Psoas muscle (tissue), 8 donors: ENCODE measurements at regions of chr2 and their contacts with region 1.

Region 1: DNA sequence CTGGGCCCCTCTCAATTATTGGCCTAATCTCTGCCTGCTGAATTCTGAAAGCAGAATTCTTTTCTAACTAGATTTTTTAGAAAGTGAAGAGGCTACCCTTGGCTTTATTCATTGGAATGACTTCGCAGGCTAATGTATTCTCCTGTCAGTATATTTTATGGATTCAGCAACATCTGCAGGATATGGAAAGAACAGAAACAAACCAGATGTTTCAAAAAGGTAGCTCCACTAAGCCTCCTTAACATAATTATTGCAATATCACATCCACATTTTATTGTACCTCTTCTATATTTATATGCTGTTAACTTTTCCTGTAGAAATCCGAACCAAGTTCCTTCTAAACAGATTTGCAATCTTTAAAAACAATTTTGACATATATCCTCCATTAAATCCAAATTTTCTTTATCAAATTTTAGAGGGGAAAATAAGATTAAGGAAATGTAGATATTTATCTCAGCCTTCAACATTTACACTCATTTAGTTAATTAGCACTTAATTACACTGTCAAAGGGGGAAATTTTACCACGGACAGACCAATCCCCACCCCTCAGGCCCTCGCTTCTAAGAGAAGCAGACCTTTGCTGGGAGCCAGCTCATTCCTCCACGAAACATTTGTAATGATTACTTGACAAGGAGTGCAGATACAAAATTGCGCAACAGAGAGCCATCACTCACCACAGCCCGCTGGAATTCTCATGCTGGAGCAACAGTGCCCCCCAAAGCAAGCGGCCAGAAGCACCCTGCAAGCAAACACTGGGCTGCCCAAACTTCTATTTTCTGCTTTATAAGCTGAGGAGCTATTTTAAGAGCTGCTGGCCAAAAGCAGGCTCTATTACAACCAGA is 253.4 kb downstream of the ETAA1 start:
- DNase-seq: peak; percentile 81 to 89
- ATAC-seq: peak; percentile 82 to 92 (median 88)
- H3K4me3 ChIP-seq: no peak overlapping the region
- H3K27ac ChIP-seq: peak overlapping the region; percentile 80
- H3K4me1 ChIP-seq: peaks cover 26% of the 10 kb centered on the region
- H3K27me3 ChIP-seq: no peaks in the 10 kb centered on the region
- CTCF ChIP-seq: peak; percentile 68

Region 2: GRCh38 chr2:66574701-66575624 is 1075.5 kb before region 1 on chr2:
- intact Hi-C with region 1: loop called in 1 of 2 experiments (anchors 10 kb)
- DNase-seq: peak; percentile 56 to 65
- ATAC-seq: peak; percentile 55 to 73 (median 64)
- H3K4me3 ChIP-seq: peak overlapping the region; percentile 66
- H3K27ac ChIP-seq: no peak overlapping the region
- H3K4me1 ChIP-seq: peaks cover 15% of the 10 kb centered on the region
- H3K27me3 ChIP-seq: peaks cover 0 to 61% (median 28%) of the 10 kb centered on the region in 3 donors
- CTCF ChIP-seq: peak; percentile 31

Region 3: GRCh38 chr2:67108231-67108630 is 542.3 kb before region 1 on chr2:
- intact Hi-C with region 1: no loop called
- DNase-seq: no peak
- ATAC-seq: no peak
- H3K4me3 ChIP-seq: no peak overlapping the region
- H3K27ac ChIP-seq: no peak overlapping the region
- H3K4me1 ChIP-seq: no peaks in the 10 kb centered on the region
- H3K27me3 ChIP-seq: no peaks in the 10 kb centered on the region
- CTCF ChIP-seq: no peak

Region 4: GRCh38 chr2:67397143-67397986 is 253.1 kb before region 1 on chr2 and contains the start of gene ETAA1:
- intact Hi-C with region 1: loop called in 1 of 2 experiments (anchors 10 kb)
- DNase-seq: peak; percentile 94 to 96
- ATAC-seq: peak; percentile 100
- H3K4me3 ChIP-seq: peak within 1 kb of the TSS; percentile 97
- H3K27ac ChIP-seq: peak within 1 kb of the TSS; percentile 91
- H3K4me1 ChIP-seq: peaks cover 4% of the 10 kb centered on the region
- H3K27me3 ChIP-seq: no peaks in the 10 kb centered on the region
- CTCF ChIP-seq: no peak
- total RNA-seq, gene ETAA1: 2.7 to 3.6 (median 2.9) TPM

Region 5: GRCh38 chr2:67463810-67464209 is 186.7 kb before region 1 on chr2:
- intact Hi-C with region 1: loop called in 1 of 2 experiments (anchors 5 kb)
- DNase-seq: no peak
- ATAC-seq: peak; percentile 91 to 99 (median 95)
- H3K4me3 ChIP-seq: no peak overlapping the region
- H3K27ac ChIP-seq: peak overlapping the region; percentile 24
- H3K4me1 ChIP-seq: no peaks in the 10 kb centered on the region
- H3K27me3 ChIP-seq: no peaks in the 10 kb centered on the region
- CTCF ChIP-seq: no peak

Region 6: GRCh38 chr2:67600946-67601345 is 49.6 kb before region 1 on chr2:
- intact Hi-C with region 1: no loop called
- DNase-seq: no peak
- ATAC-seq: no peak
- H3K4me3 ChIP-seq: no peak overlapping the region
- H3K27ac ChIP-seq: no peak overlapping the region
- H3K4me1 ChIP-seq: no peaks in the 10 kb centered on the region
- H3K27me3 ChIP-seq: no peaks in the 10 kb centered on the region
- CTCF ChIP-seq: no peak

Region 7: DNA sequence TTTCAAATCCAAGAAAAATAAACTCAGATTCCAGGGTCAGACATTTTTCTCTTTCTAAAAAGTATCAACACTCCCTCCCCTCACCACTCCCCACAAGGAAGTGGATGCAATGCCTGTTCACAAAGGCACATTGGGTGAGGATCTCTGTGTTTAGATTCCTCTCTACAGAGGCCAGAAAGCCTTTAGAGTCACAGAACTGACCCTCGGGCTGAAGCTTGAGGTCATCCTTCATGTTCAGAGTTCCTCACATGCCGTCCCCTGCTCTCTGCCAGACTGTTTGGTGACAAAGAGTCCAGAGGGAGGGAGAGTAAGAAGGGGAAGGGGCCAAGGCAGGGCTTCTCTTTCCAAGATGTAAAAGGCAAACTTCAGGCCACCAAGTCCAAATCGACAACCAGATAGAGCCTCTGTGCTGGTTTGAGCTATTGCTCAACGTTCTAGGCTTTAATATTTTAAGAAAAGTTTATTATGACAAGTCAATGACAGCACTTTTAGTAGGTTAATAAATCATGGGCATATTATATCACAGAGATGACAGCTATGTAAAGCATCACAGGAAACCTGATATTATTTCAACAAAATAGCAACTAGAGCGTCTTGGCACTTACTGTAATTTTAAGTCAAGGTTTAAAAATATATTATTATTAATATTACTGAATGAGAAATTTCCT is 16.0 kb after region 1 on chr2:
- intact Hi-C with region 1: loop called in 1 of 2 experiments (anchors 2 kb)
- DNase-seq: peak in 1 of 2 donors; percentile 73
- ATAC-seq: peak; percentile 65 to 86 (median 74)
- H3K4me3 ChIP-seq: no peak overlapping the region
- H3K27ac ChIP-seq: peak overlapping the region; percentile 79
- H3K4me1 ChIP-seq: peaks cover 40% of the 10 kb centered on the region
- H3K27me3 ChIP-seq: no peaks in the 10 kb centered on the region
- CTCF ChIP-seq: no peak

Region 8: DNA sequence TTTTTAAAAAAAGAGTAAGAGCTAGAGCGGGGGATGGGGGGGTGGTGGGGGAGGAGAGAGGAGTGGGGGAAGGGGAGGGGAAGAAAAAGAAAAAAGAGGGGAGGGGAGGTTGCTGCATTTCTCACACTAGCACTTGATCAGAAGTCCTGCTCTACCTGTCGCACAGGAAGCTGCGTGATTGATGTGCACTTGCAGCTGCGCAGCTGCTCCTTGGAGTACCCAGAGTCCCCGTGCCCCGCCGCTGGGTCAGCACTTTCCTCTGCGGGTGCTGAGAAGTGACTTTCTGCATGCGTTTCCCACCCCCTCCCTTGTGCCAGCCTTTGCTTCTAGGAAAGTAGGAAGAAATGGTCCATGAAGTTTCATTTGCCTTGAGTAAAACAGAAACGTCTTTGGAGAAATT is 43.9 kb after region 1 on chr2:
- intact Hi-C with region 1: no loop called
- DNase-seq: peak in 1 of 2 donors; percentile 54
- ATAC-seq: peak in 3 of 4 donors; percentile 48 to 86 (median 60)
- H3K4me3 ChIP-seq: no peak overlapping the region
- H3K27ac ChIP-seq: no peak overlapping the region
- H3K4me1 ChIP-seq: no peaks in the 10 kb centered on the region
- H3K27me3 ChIP-seq: peaks cover 0 to 2% (median 0%) of the 10 kb centered on the region in 3 donors
- CTCF ChIP-seq: no peak

Region 9: DNA sequence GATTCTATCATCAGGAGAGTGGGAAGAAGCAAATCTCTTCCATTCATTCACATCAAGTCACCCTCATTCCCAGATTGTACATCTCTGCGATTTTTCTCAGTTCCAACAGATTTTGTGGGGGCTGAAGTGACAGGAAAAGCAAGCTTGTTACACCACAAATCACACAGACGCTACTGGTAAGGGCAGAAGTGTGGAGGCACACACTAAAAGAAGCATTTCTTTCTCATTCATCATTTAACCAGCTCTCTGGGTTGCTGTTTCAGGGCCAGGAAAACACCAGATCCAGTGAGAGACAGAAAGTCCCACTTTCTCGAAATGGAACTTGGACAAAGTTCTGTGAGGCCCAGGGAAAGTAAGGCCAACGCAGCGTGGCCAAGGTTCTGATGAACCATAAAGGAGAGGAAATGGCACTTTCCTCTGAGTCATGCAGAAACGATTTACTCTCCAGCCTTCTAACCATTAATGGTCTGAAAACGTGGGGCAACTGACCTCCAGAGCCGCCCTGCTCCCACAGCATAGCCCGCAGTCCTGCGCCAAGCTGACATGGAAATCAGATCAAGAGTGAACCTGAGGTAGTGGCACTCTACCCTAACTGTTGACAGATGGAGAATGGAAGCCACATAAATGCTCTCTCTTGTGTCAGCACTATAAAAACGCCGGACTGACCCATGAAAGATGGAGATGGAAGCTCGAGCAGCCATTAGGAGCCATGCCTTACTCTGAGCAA is 221.3 kb after region 1 on chr2:
- intact Hi-C with region 1: no loop called
- DNase-seq: no peak
- ATAC-seq: peak in 2 of 4 donors; percentile 24 to 37
- H3K4me3 ChIP-seq: no peak overlapping the region
- H3K27ac ChIP-seq: peak overlapping the region; percentile 1
- H3K4me1 ChIP-seq: no peaks in the 10 kb centered on the region
- H3K27me3 ChIP-seq: peaks cover 0 to 5% (median 0%) of the 10 kb centered on the region in 3 donors
- CTCF ChIP-seq: no peak